ENCODE measurements at regions of chr17 and their contacts with region 1.

Region 1: GRCh38 chr17:42019509-42020404 is at the start of gene NKIRAS2:
- DNase-seq: peak; percentile 95
- ATAC-seq: peak; percentile 79
- H3K4me3 Mint-ChIP-seq: peak within 1 kb of the TSS; percentile 98
- H3K27ac Mint-ChIP-seq: peak within 1 kb of the TSS; percentile 86
- H3K4me1 Mint-ChIP-seq: peaks cover 52% of the 10 kb centered on the region
- H3K27me3 Mint-ChIP-seq: no peaks in the 10 kb centered on the region
- total RNA-seq, gene NKIRAS2: 25.7 to 26.2 TPM

Region 2: DNA sequence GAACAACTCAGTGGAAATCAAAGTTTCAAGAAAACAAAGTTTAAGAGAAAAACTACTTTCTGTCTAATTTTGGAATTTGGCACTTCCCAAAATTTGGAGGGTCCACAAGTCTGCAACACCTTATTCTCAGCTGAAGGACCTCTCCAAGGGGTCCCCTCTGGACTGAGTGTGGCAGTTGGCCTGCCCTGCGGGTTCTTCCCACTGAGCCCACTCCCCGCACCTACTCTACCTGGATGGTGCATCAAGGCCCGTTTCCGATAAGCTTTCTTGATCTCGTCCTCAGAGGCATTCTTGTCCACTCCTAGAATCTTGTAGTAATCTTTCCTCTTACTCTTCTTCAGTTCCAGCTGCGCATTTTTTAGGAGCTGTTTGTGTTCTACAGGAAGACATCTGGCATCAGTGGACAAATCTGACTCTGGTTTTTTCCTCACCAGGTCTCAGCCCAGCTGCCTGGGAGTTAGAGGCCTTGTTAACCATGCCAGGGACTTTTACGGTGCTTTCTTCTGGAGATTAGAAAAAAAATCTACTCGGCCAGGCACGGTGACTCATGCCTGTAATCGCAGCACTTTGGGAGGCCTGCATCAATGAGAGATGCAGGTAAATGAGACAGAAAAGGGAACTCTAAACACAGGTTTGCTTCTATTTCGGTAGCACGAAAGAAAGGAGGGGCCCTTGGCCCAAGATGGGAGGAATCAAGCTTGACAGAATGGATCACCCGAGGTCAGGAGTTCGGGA is 37.6 kb before region 1 on chr17:
- CTCF ChIA-PET with region 1: no interaction called
- POLR2A ChIA-PET with region 1: no interaction called
- DNase-seq: no peak
- ATAC-seq: no peak
- H3K4me3 Mint-ChIP-seq: no peak overlapping the region
- H3K27ac Mint-ChIP-seq: no peak overlapping the region
- H3K4me1 Mint-ChIP-seq: no peaks in the 10 kb centered on the region
- H3K27me3 Mint-ChIP-seq: no peaks in the 10 kb centered on the region

Region 3: DNA sequence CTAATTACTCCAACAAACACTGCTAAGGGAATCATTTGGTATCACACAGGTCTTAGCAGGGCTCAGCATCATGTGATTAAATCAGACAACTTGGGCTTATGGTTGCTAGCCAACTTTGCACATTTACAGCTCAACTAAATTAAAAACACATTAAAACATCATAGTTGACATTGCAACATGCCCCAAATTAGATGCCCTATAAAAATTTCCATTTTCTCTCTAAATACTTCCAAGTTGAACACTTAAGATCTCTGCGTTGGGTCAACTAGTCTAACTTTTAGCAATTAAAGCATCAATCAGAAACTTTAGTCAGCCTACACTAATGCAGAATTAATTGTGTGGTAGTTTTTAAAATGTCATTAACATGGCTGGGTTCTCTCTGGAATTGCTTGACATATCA is 14.6 kb before region 1 on chr17:
- CTCF ChIA-PET with region 1: interaction called, 10 read pairs
- POLR2A ChIA-PET with region 1: interaction called, 8 read pairs
- DNase-seq: no peak
- ATAC-seq: no peak
- H3K4me3 Mint-ChIP-seq: no peak overlapping the region
- H3K27ac Mint-ChIP-seq: no peak overlapping the region
- H3K4me1 Mint-ChIP-seq: peaks cover 17% of the 10 kb centered on the region
- H3K27me3 Mint-ChIP-seq: no peaks in the 10 kb centered on the region

Region 4: GRCh38 chr17:42067351-42068091 is 47.8 kb after region 1 on chr17:
- CTCF ChIA-PET with region 1: interaction called, 36 read pairs
- POLR2A ChIA-PET with region 1: interaction called, 5 read pairs
- DNase-seq: peak; percentile 79
- ATAC-seq: no peak
- H3K4me3 Mint-ChIP-seq: no peak overlapping the region
- H3K27ac Mint-ChIP-seq: no peak overlapping the region
- H3K4me1 Mint-ChIP-seq: peaks cover 42% of the 10 kb centered on the region
- H3K27me3 Mint-ChIP-seq: no peaks in the 10 kb centered on the region

Region 5: DNA sequence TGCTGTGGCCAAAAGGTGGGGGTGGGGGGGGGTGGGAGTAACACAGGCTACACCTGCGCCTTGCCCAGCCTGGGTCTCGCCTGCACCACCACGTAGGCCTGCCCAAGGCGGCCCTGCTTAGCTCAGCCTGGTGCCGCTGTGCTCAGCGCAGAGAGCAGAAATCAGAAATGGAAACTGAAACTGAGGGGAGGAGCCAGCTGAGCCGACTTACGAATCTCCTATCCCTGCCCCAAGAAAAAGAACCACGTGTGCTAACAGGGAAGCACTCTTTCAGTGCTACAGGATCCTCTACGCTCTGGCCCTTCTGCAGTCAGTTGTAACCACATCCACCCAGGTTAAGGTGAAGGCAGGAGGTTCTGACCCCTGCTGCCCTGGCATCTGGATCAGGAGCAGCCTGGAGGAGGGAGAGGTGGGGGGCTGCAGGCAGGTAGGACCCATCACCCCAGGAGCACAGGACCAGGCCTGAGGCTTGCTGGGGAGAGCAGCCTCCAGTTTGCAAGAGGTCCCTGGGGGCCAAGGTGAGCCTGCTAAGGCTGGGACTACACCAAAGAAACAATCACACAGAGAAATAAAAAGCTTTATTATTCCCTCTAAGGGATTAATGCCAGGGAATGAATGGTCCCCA is 92.9 kb after region 1 on chr17 and contains the start of gene DHX58:
- CTCF ChIA-PET with region 1: interaction called, 168 read pairs
- POLR2A ChIA-PET with region 1: interaction called, 96 read pairs
- DNase-seq: peak; percentile 92
- ATAC-seq: peak; percentile 89
- H3K4me3 Mint-ChIP-seq: peak within 1 kb of the TSS; percentile 90
- H3K27ac Mint-ChIP-seq: peak within 1 kb of the TSS; percentile 98
- H3K4me1 Mint-ChIP-seq: peaks cover 68% of the 10 kb centered on the region
- H3K27me3 Mint-ChIP-seq: no peaks in the 10 kb centered on the region
- total RNA-seq, gene DHX58: 71.9 to 72.9 TPM

Region 6: DNA sequence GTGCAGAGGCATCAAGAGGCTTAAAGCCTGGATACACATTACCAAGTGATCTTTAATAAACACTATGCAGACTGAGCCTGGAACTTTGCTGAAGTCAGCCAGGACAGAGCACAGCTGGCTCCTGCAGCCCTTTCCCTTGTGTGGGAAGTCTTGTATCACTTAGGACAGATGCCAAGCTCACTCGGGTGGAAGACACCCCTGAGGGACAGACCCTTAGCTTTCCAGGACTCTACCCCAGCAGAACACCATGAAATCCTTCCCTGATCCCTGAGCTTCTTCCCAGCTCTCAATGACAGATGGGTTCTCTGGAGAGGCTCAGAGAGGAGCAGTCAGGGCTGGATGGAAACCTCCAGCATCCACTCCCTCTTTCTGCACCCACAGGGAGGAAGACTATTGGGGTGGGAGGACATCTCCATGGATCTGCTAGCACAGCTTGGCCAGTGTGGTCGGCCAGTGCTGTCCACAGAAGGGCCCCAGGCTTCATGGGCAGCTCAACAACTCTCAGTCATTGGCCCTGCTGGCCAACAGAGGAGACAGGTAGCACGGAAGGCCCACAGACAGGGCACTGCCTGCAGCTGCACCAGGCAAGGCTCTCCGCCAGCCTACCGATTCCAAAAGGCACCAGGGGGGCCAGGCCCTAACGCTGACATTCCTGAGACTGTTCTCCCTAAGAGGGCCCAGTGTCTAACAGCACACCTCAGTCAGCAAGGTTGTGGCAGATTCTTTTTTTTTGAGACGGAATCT is 119.2 kb after region 1 on chr17:
- CTCF ChIA-PET with region 1: no interaction called
- POLR2A ChIA-PET with region 1: no interaction called
- DNase-seq: no peak
- ATAC-seq: no peak
- H3K4me3 Mint-ChIP-seq: no peak overlapping the region
- H3K27ac Mint-ChIP-seq: no peak overlapping the region
- H3K4me1 Mint-ChIP-seq: peaks cover 29% of the 10 kb centered on the region
- H3K27me3 Mint-ChIP-seq: no peaks in the 10 kb centered on the region

Region 7: DNA sequence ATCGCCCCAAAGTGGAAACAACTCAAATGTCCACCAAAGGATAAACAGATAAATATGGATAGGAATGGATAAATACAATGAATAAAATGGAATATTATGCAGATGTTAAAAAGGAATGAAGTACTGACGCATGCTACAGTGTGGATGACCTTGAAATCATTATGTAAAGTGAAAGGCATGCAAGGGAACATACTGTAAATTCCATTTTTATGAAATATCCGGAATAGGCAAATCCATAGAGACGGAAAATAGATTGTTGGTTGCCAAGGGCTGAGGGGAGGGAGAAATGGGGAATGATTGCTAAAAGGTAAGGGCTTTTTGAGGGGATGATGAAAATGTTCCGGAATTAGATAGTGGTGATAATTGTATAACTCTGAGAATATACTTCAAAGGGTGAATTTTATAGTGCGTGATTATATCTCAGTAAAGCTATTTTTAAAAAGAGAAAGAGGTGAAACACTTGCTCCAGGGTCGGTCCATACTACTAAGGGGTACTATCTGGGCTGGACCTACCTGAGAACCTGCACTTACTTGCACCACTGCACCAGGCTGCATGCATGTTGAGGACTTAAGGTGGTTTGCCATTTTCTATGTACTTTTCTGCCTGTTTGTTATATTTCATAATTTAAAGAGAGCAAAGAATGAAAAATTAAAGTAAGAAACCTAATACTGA is 220.6 kb after region 1 on chr17:
- CTCF ChIA-PET with region 1: no interaction called
- POLR2A ChIA-PET with region 1: no interaction called
- DNase-seq: no peak
- ATAC-seq: no peak
- H3K4me3 Mint-ChIP-seq: no peak overlapping the region
- H3K27ac Mint-ChIP-seq: no peak overlapping the region
- H3K4me1 Mint-ChIP-seq: peaks cover 9% of the 10 kb centered on the region
- H3K27me3 Mint-ChIP-seq: no peaks in the 10 kb centered on the region

Region 8: GRCh38 chr17:42405963-42406495 is 386.3 kb after region 1 on chr17:
- CTCF ChIA-PET with region 1: no interaction called
- POLR2A ChIA-PET with region 1: no interaction called
- DNase-seq: peak; percentile 85
- ATAC-seq: peak; percentile 77
- H3K4me3 Mint-ChIP-seq: no peak overlapping the region
- H3K27ac Mint-ChIP-seq: no peak overlapping the region
- H3K4me1 Mint-ChIP-seq: peaks cover 21% of the 10 kb centered on the region
- H3K27me3 Mint-ChIP-seq: no peaks in the 10 kb centered on the region

Measured in activated CD8-positive, alpha-beta T cell treated with anti-CD3 and anti-CD28 coated beads, Interleukin-2, amount 10 ng/mL, durations not matched to agents 7 days and 5 days (primary cell).